ENCODE measurements at regions of chr14 and their contacts with region 1.

Region 1: GRCh38 chr14:56555921-56556570 is 23.6 kb upstream of the TMEM260 start:
- DNase-seq: peak in 1 of 2 experiments; percentile 52
- H3K4me3 ChIP-seq: no peak overlapping the region
- H3K4me3 Mint-ChIP-seq: no peak overlapping the region
- H3K27ac Mint-ChIP-seq: no peak overlapping the region
- H3K4me1 ChIP-seq: 0 out of 2 replicates have a peak, but pooled peaks cover 4% of the 10 kb centered on the region
- H3K4me1 Mint-ChIP-seq: no peaks in the 10 kb centered on the region
- H3K27me3 ChIP-seq: no peaks in the 10 kb centered on the region
- H3K27me3 Mint-ChIP-seq: peaks cover 2% of the 10 kb centered on the region
- CTCF ChIP-seq: peak; percentile 63 to 83

Region 2: DNA sequence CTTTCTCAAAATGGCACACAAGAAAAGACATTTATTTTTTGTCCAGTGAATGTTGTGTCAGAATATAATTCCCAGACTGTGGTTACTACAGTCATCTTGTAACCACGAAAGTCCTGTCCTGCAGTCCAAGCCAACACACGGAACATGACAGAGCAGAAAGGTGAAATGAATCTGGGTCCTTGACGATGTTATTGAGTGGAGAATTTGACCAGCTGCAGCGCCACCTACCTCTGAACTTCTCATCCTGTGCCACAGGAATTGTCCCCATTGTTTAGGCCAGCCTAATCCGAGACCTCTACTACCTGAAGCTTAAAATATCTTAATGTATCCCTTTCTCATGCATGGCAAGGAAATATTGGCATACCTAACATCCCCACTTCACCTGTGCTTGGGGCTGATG is 318.3 kb after region 1 on chr14:
- CTCF ChIA-PET with region 1: no interaction called
- POLR2A ChIA-PET with region 1: no interaction called
- intact Hi-C with region 1: loop called (anchors 1 kb)
- DNase-seq: peak; percentile 49 to 52
- H3K4me3 ChIP-seq: no peak overlapping the region
- H3K4me3 Mint-ChIP-seq: no peak overlapping the region
- H3K27ac Mint-ChIP-seq: no peak overlapping the region
- H3K4me1 ChIP-seq: no peaks in the 10 kb centered on the region
- H3K4me1 Mint-ChIP-seq: no peaks in the 10 kb centered on the region
- H3K27me3 ChIP-seq: no peaks in the 10 kb centered on the region
- H3K27me3 Mint-ChIP-seq: peaks cover 4% of the 10 kb centered on the region
- CTCF ChIP-seq: peak; percentile 55 to 57

Region 3: GRCh38 chr14:57189070-57189469 is 633.0 kb after region 1 on chr14:
- CTCF ChIA-PET with region 1: no interaction called
- POLR2A ChIA-PET with region 1: no interaction called
- intact Hi-C with region 1: loop called (anchors 5 kb)
- DNase-seq: peak in 1 of 2 experiments; percentile 4
- H3K4me3 ChIP-seq: no peak overlapping the region
- H3K4me3 Mint-ChIP-seq: no peak overlapping the region
- H3K27ac Mint-ChIP-seq: no peak overlapping the region
- H3K4me1 ChIP-seq: no peaks in the 10 kb centered on the region
- H3K4me1 Mint-ChIP-seq: no peaks in the 10 kb centered on the region
- H3K27me3 ChIP-seq: 0 out of 2 replicates have a peak, but pooled peaks cover 2% of the 10 kb centered on the region
- H3K27me3 Mint-ChIP-seq: peaks cover 9% of the 10 kb centered on the region
- CTCF ChIP-seq: peak in 1 of 2 experiments; percentile 24

Measured in Caco-2 (cell line).